ENCODE measurements at regions of chr6 and their contacts with region 1.

Region 1: DNA sequence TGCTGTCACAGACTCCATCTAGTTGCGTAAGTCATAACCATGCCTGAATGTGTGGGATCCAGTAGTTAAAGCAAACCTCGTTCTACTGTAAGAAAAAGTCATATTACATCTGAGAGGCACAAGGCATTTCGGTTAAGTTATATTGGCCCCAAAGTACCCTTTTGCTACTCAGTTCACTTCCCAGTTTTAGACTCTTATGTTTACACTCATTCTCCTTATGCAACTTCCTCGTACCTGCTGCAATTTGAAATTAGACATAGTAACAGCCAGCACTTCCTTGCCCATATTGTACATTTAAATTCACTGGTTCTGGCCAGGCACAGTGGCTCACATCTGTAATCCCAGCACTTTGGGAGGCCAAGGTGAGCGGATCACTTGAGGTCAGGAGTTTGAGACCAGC is 37.0 kb downstream of the PEX7 start:
- DNase-seq: no peak
- H3K4me3 ChIP-seq: no peak overlapping the region
- H3K27me3 ChIP-seq: no peaks in the 10 kb centered on the region
- CTCF ChIP-seq: no peak

Region 2: DNA sequence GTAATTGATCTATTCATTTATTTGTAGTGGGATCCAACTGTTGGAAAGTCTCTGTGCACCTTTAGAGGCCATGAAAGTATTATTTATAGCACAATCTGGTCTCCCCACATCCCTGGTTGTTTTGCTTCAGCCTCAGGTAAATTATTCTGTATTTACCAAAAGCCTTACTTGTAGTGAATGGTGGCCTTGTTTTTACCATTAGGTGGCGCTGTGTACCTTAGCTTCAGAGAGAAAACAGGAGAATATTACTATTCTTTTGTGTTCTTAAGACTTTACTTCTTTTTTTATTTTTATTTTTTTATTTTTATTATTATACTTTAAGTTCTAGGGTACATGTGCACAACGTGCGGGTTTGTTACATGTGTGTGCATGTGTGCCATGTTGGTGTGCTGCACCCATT is 13.4 kb before region 1 on chr6:
- CTCF ChIA-PET with region 1: interaction called, 14 read pairs
- POLR2A ChIA-PET with region 1: no interaction called
- DNase-seq: no peak
- H3K4me3 ChIP-seq: no peak overlapping the region
- H3K27me3 ChIP-seq: no peaks in the 10 kb centered on the region
- CTCF ChIP-seq: peak; percentile 75